ENCODE measurements at regions of chr14 and their contacts with region 1.

Region 1: DNA sequence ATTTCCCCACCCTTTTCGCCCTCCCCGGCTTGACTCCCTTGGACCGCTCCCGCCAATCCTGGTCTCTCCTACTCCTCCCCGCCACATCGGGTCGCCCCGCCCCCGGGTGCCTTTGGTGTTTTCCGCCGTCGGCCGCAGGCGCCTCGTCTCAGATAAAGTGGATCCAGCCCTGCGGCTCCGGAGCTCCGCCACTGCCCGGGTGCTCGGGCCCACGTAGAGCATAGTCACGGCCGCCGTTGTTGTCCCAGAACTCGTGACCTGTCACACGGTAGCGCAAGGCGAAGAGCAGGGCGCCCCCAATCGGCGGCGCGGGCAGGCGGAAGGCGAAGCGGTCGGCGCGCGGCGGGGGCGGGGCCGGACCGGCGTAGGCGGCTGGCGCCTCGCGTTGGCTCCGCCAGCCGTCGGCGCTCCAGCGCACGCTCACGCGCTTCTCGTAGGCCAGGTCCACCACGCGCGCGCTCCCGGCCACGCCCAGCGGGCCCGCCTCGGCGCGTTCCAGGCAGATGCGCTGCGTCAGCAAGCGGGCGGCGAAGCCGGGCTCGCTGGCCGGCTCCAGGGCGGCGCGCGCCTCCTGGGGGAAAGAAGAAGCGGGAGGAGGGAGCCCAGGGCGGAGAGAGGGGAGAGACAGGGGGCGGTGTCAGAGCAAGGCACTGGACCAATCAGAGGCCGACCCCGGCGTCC is 1.2 kb downstream of the PPP1R3E start:
- DNase-seq: peak; percentile 93 to 99 (median 98)
- ATAC-seq: peak; percentile 86
- H3K4me3 ChIP-seq: peak overlapping the region; percentile 98
- H3K4me3 Mint-ChIP-seq: peak overlapping the region; percentile 89 to 100 (median 98)
- H3K27ac ChIP-seq: peak overlapping the region; percentile 95
- H3K27ac Mint-ChIP-seq: peak overlapping the region; percentile 92 to 99 (median 97)
- H3K4me1 ChIP-seq: peaks cover 0 to 15% of the 10 kb centered on the region in 2 donors
- H3K4me1 Mint-ChIP-seq: peaks cover 7 to 41% (median 26%) of the 10 kb centered on the region in 7 donors
- H3K27me3 ChIP-seq: no peaks in the 10 kb centered on the region
- H3K27me3 Mint-ChIP-seq: peaks cover 8 to 15% (median 12%) of the 10 kb centered on the region in 5 donors

Region 2: GRCh38 chr14:21476925-21477681 is 1824.3 kb before region 1 on chr14 and contains the starts of genes RAB2B and TOX4:
- CTCF ChIA-PET with region 1: no interaction called
- POLR2A ChIA-PET with region 1: no interaction called
- intact Hi-C with region 1: loop called in 1 of 2 experiments (anchors 10 kb)
- DNase-seq: peak; percentile 83 to 98 (median 97)
- ATAC-seq: peak; percentile 99
- H3K4me3 ChIP-seq: peak within 1 kb of the TSS; percentile 99
- H3K4me3 Mint-ChIP-seq: peak within 1 kb of the TSS; percentile 96 to 100 (median 99)
- H3K27ac ChIP-seq: peak within 1 kb of the TSS; percentile 88
- H3K27ac Mint-ChIP-seq: peak within 1 kb of the TSS; percentile 93 to 100 (median 98)
- H3K4me1 ChIP-seq: peaks cover 21 to 22% of the 10 kb centered on the region in 2 donors
- H3K4me1 Mint-ChIP-seq: peaks cover 18 to 74% (median 58%) of the 10 kb centered on the region in 7 donors
- H3K27me3 ChIP-seq: no peaks in the 10 kb centered on the region
- H3K27me3 Mint-ChIP-seq: no peaks in the 10 kb centered on the region
- total RNA-seq, gene RAB2B: 26.6 to 32.8 (median 30.5) TPM
- total RNA-seq, gene TOX4: 78.5 to 116 (median 86.5) TPM

Region 3: DNA sequence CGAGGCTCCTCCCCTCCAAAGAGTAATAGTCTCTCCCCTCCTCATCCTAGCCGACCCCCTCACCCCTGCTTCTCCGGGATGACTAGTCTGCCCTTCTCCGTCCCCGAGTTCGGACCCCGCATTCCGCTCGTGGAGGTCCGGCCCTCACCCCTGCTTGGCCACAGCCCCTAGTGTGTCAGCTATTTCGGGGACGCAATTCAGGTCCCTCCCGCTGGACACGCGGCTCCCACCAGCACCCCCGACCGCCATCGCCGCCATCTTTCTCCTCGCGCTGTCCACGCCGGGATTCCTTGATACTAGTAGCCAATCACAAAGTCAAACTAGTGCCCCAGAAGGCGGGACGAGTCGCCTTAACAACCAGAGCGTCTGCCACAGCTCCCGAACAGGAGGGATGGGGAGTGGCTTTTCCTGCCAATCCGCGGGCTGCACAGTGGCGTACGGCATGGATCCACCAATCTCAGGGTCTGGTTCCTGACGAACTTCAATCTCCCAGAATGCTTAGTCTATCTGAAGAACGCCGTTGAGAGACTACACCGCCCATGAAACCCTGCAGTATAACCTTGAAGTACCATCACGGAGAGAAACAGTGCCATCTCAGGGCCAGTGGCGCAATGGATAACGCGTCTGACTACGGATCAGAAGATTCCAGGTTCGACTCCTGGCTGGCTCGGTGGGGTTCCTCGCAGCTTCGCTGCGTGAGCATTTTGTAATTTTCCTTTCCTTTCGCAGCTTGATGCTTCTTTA is 372.2 kb before region 1 on chr14 and contains the start of gene PRMT5:
- CTCF ChIA-PET with region 1: no interaction called
- POLR2A ChIA-PET with region 1: interaction called, 4 read pairs
- intact Hi-C with region 1: loop called in 1 of 2 experiments (anchors 1 kb)
- DNase-seq: peak; percentile 81 to 100 (median 99)
- ATAC-seq: peak; percentile 97
- H3K4me3 ChIP-seq: peak within 1 kb of the TSS; percentile 91
- H3K4me3 Mint-ChIP-seq: no peak within 1 kb of the TSS
- H3K27ac ChIP-seq: peak within 1 kb of the TSS; percentile 91
- H3K27ac Mint-ChIP-seq: no peak within 1 kb of the TSS
- H3K4me1 ChIP-seq: peaks cover 9 to 17% of the 10 kb centered on the region in 2 donors
- H3K4me1 Mint-ChIP-seq: peaks cover 5 to 36% (median 20%) of the 10 kb centered on the region in 7 donors
- H3K27me3 ChIP-seq: no peaks in the 10 kb centered on the region
- H3K27me3 Mint-ChIP-seq: no peaks in the 10 kb centered on the region
- total RNA-seq, gene PRMT5: 24.9 to 82.8 (median 34.2) TPM

Region 4: GRCh38 chr14:23068476-23069412 is 232.7 kb before region 1 on chr14:
- CTCF ChIA-PET with region 1: interaction called, 3 read pairs
- POLR2A ChIA-PET with region 1: interaction called, 3 read pairs
- intact Hi-C with region 1: loop called in 1 of 2 experiments (anchors 1 kb)
- DNase-seq: peak; percentile 37 to 83 (median 74)
- ATAC-seq: peak; percentile 90
- H3K4me3 ChIP-seq: no peak overlapping the region
- H3K4me3 Mint-ChIP-seq: peak overlapping the region in 7 of 10 donors; percentile 56 to 76 (median 64)
- H3K27ac ChIP-seq: no peak overlapping the region
- H3K27ac Mint-ChIP-seq: peak overlapping the region; percentile 63 to 88 (median 78)
- H3K4me1 ChIP-seq: peaks cover 16 to 28% of the 10 kb centered on the region in 2 donors
- H3K4me1 Mint-ChIP-seq: peaks cover 30 to 58% (median 46%) of the 10 kb centered on the region in 7 donors
- H3K27me3 ChIP-seq: no peaks in the 10 kb centered on the region
- H3K27me3 Mint-ChIP-seq: no peaks in the 10 kb centered on the region

Region 5: GRCh38 chr14:23286020-23286905 is 15.2 kb before region 1 on chr14 and contains the start of gene HOMEZ:
- CTCF ChIA-PET with region 1: interaction called, 13 read pairs
- POLR2A ChIA-PET with region 1: interaction called, 135 read pairs
- intact Hi-C with region 1: loop called (anchors 1 kb)
- DNase-seq: peak; percentile 89 to 97 (median 94)
- ATAC-seq: peak; percentile 99
- H3K4me3 ChIP-seq: peak within 1 kb of the TSS; percentile 84
- H3K4me3 Mint-ChIP-seq: peak within 1 kb of the TSS; percentile 92 to 100 (median 96)
- H3K27ac ChIP-seq: peak within 1 kb of the TSS; percentile 89
- H3K27ac Mint-ChIP-seq: peak within 1 kb of the TSS; percentile 83 to 98 (median 93)
- H3K4me1 ChIP-seq: peaks cover 3 to 6% of the 10 kb centered on the region in 2 donors
- H3K4me1 Mint-ChIP-seq: peaks cover 15 to 37% (median 30%) of the 10 kb centered on the region in 7 donors
- H3K27me3 ChIP-seq: no peaks in the 10 kb centered on the region
- H3K27me3 Mint-ChIP-seq: no peaks in the 10 kb centered on the region
- total RNA-seq, gene HOMEZ: 5.2 to 20.4 (median 15.5) TPM

Region 6: DNA sequence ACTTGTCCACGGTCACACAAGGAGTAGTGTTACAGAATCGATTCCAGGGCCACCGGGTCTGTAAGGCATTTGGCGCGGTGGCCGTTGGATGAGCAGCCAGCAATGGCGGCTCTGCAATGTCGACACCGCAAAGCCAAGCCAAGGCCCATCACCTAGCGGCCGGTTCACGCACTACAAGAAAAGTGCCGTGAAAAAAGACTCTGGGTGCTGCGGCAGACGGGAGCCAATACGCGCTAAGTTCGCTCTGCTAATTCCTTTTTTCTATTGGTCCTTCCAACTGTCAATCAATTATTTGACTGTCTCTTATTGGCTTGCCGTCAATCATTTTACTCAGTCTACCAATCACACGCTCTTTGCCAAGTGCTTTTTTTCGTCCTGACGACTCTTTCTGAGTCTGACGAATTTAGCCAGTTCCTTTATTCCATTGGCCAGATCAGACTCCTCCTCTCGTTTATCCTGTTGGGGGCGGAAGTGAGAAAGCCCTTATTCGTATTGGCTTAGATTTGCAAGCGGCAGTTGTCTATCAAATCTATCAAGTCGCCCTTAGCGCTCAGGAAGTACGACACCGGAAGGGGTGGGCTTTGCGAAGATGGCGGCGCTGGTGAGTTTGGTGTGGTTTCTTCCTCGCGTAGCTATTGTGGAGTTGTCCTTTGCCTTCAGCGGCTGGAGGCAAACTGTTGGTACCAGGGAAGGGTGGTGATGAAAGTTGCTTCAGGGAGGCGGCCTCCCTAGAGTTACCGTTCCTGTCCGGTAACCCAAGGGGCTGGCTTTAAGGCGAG is 167.9 kb after region 1 on chr14 and contains the start of gene NGDN:
- CTCF ChIA-PET with region 1: no interaction called
- POLR2A ChIA-PET with region 1: interaction called, 3 read pairs
- intact Hi-C with region 1: loop called (anchors 1 to 2 kb)
- DNase-seq: peak; percentile 76 to 99 (median 96)
- ATAC-seq: peak; percentile 94
- H3K4me3 ChIP-seq: peak within 1 kb of the TSS; percentile 73
- H3K4me3 Mint-ChIP-seq: peak within 1 kb of the TSS in 1 of 10 donors; percentile 77
- H3K27ac ChIP-seq: peak within 1 kb of the TSS; percentile 94
- H3K27ac Mint-ChIP-seq: peak within 1 kb of the TSS in 2 of 9 donors; percentile 26 to 68
- H3K4me1 ChIP-seq: peaks cover 6 to 11% of the 10 kb centered on the region in 2 donors
- H3K4me1 Mint-ChIP-seq: peaks cover 7 to 10% (median 7%) of the 10 kb centered on the region in 7 donors
- H3K27me3 ChIP-seq: no peaks in the 10 kb centered on the region
- H3K27me3 Mint-ChIP-seq: no peaks in the 10 kb centered on the region
- total RNA-seq, gene NGDN: 52.9 to 152 (median 74.0) TPM

Region 7: GRCh38 chr14:24431569-24432258 is 1130.3 kb after region 1 on chr14:
- CTCF ChIA-PET with region 1: no interaction called
- POLR2A ChIA-PET with region 1: no interaction called
- intact Hi-C with region 1: loop called in 1 of 2 experiments (anchors 2 kb)
- DNase-seq: peak; percentile 76 to 91 (median 86)
- ATAC-seq: peak; percentile 77
- H3K4me3 ChIP-seq: peak overlapping the region; percentile 96
- H3K4me3 Mint-ChIP-seq: peak overlapping the region; percentile 82 to 96 (median 91)
- H3K27ac ChIP-seq: peak overlapping the region; percentile 99
- H3K27ac Mint-ChIP-seq: peak overlapping the region; percentile 51 to 97 (median 96)
- H3K4me1 ChIP-seq: peaks cover 24 to 41% of the 10 kb centered on the region in 2 donors
- H3K4me1 Mint-ChIP-seq: peaks cover 19 to 59% (median 53%) of the 10 kb centered on the region in 7 donors
- H3K27me3 ChIP-seq: no peaks in the 10 kb centered on the region
- H3K27me3 Mint-ChIP-seq: no peaks in the 10 kb centered on the region